Heart right ventricle (tissue), 16 donors: ENCODE measurements at regions of chr5 and their contacts with region 1.

Region 1: GRCh38 chr5:137833463-137833862 is 34.2 kb upstream of the MYOT start:
- DNase-seq: no peak
- ATAC-seq: no peak
- H3K4me3 ChIP-seq: no peak overlapping the region
- H3K27ac ChIP-seq: peak overlapping the region in 9 of 10 donors; percentile 28 to 92 (median 58)
- H3K4me1 ChIP-seq: peaks cover 2 to 78% (median 36%) of the 10 kb centered on the region in 9 donors
- H3K27me3 ChIP-seq: no peaks in the 10 kb centered on the region
- CTCF ChIP-seq: no peak

Region 2: DNA sequence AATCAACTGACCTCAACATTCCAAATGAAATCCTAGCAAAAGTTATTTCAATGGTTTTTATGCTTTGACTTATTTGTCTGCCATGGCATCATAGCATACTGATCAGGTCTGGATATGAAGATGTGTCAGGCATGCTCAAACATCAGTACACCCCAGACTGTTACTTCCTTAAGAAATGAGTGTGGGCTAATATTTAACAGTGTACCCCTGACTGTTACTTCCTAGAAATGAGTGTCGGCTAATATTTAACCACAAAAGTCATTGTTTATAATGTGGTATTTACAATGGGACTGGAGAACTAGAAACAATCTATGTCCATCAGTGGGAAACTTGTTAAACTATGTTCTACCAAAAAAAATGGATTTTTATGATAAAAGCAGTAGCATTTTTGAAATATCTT is 41.2 kb before region 1 on chr5:
- intact Hi-C with region 1: no loop called
- DNase-seq: no peak
- ATAC-seq: no peak
- H3K4me3 ChIP-seq: no peak overlapping the region
- H3K27ac ChIP-seq: no peak overlapping the region
- H3K4me1 ChIP-seq: peaks cover 0 to 10% (median 0%) of the 10 kb centered on the region in 9 donors
- H3K27me3 ChIP-seq: no peaks in the 10 kb centered on the region
- CTCF ChIP-seq: no peak

Region 3: GRCh38 chr5:137880313-137880712 is 46.9 kb after region 1 on chr5:
- intact Hi-C with region 1: loop called in 5 of 10 experiments (anchors 2 to 5 kb)
- DNase-seq: peak in 1 of 2 donors; percentile 7
- ATAC-seq: peak in 7 of 8 donors; percentile 79 to 98 (median 91)
- H3K4me3 ChIP-seq: peak overlapping the region in 1 of 10 donors; percentile 8
- H3K27ac ChIP-seq: peak overlapping the region in 9 of 10 donors; percentile 51 to 81 (median 65)
- H3K4me1 ChIP-seq: peaks cover 0 to 5% (median 0%) of the 10 kb centered on the region in 9 donors
- H3K27me3 ChIP-seq: no peaks in the 10 kb centered on the region
- CTCF ChIP-seq: no peak